AG04450 (cell line): ENCODE measurements at regions of chr2 and their contacts with region 1.

Region 1: GRCh38 chr2:69893684-69894551 is at the start of gene SNRNP27:
- DNase-seq: peak; percentile 53
- H3K4me3 ChIP-seq: peak within 1 kb of the TSS; percentile 81
- H3K27ac ChIP-seq: peak within 1 kb of the TSS; percentile 84
- H3K27me3 ChIP-seq: peaks cover 4% of the 10 kb centered on the region
- CTCF ChIP-seq: no peak
- polyA plus RNA-seq, gene SNRNP27: 38.1 and 57.8 TPM in 2 replicates

Region 2: GRCh38 chr2:69390471-69390870 is 503.4 kb before region 1 on chr2:
- CTCF ChIA-PET with region 1: no interaction called
- POLR2A ChIA-PET with region 1: no interaction called
- DNase-seq: no peak
- H3K4me3 ChIP-seq: no peak overlapping the region
- H3K27ac ChIP-seq: no peak overlapping the region
- H3K27me3 ChIP-seq: no peaks in the 10 kb centered on the region
- CTCF ChIP-seq: no peak

Region 3: GRCh38 chr2:69734035-69734631 is 159.8 kb before region 1 on chr2:
- CTCF ChIA-PET with region 1: no interaction called
- POLR2A ChIA-PET with region 1: interaction called, 10 read pairs
- DNase-seq: no peak
- H3K4me3 ChIP-seq: no peak overlapping the region
- H3K27ac ChIP-seq: no peak overlapping the region
- H3K27me3 ChIP-seq: no peaks in the 10 kb centered on the region
- CTCF ChIP-seq: no peak